HEK293 (cell line): ENCODE measurements at regions of chr1 and their contacts with region 1.

Region 1: DNA sequence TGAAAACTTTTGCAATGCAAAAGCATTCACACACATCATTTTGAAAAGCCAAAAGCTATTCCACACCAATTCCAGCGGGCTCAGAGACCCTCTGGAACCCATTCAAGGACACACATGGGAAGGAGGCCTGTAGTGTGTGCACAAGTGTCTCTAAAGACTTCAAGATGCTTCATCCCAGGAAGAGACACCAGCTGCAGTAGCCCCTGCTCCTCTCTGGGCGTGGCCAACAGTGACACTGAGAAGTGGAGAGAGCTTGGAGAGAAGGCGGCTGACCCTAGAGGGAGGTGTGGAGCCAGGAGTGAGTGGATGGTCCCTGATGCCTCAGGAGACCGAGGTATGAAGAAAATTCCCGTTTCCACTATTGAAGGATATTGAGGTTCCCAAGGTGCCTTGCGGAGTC is 14.9 kb upstream of the TNNI1 start:
- H3K4me3 ChIP-seq: no peak overlapping the region
- H3K27ac ChIP-seq: no peak overlapping the region
- H3K4me1 ChIP-seq: 0 out of 2 replicates have a peak, but pooled peaks cover 2% of the 10 kb centered on the region
- CTCF ChIP-seq: peak; percentile 56; the same call in 1 of the 2 replicates

Region 2: GRCh38 chr1:201229771-201230635 is 206.4 kb before region 1 on chr1:
- CTCF ChIA-PET with region 1: no interaction called
- POLR2A ChIA-PET with region 1: no interaction called
- H3K4me3 ChIP-seq: no peak overlapping the region
- H3K27ac ChIP-seq: no peak overlapping the region
- H3K4me1 ChIP-seq: no peaks in the 10 kb centered on the region
- CTCF ChIP-seq: no peak

Region 3: GRCh38 chr1:201447911-201448871 is 11.8 kb after region 1 on chr1:
- CTCF ChIA-PET with region 1: interaction called, 67 read pairs
- POLR2A ChIA-PET with region 1: interaction called, 6 read pairs
- H3K4me3 ChIP-seq: no peak overlapping the region
- H3K27ac ChIP-seq: no peak overlapping the region
- H3K4me1 ChIP-seq: 0 out of 2 replicates have a peak, but pooled peaks cover 6% of the 10 kb centered on the region
- CTCF ChIP-seq: peak; percentile 66

Region 4: GRCh38 chr1:201456499-201457309 is 20.3 kb after region 1 on chr1:
- CTCF ChIA-PET with region 1: interaction called, 27 read pairs
- POLR2A ChIA-PET with region 1: interaction called, 9 read pairs
- H3K4me3 ChIP-seq: no peak overlapping the region
- H3K27ac ChIP-seq: no peak overlapping the region; the same call in 1 of the 2 replicates
- H3K4me1 ChIP-seq: peaks cover 11% of the 10 kb centered on the region
- CTCF ChIP-seq: no peak

Region 5: DNA sequence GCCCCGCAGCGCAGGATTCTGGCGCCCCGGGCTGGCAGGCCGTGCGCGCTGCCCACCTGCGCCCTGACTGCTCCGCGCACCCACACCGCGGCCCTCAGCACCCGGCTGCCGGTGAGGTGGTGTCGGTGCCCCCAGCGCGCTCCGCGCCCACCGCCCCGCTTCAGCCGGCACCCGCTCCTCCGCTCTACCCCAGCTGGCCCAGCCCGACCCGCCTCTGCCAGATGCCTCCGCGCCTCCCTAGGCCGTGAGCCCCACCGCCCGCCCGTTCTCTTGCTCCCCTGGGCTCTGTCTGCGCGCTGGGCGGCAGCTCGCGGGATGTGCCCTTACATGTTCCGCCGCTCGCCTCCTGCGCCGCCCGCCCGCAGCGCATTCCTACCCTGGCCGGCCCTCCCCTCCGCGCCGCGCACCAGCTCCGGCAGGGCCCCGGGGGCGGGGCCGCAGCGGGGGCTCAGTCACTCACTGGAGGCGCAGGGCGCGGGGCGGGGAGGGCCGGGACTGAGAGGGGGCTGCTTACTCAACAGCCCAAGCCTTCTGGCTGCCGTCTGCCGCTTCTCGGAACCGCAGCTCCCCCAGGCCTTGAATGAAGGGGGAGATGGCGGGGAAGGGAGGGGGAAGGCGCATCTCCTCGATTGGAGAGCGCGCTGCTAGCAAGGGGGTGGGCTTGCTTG is 32.6 kb after region 1 on chr1 and contains the start of gene PHLDA3:
- CTCF ChIA-PET with region 1: interaction called, 7 read pairs
- POLR2A ChIA-PET with region 1: interaction called, 12 read pairs
- H3K4me3 ChIP-seq: peak within 1 kb of the TSS; percentile 71
- H3K27ac ChIP-seq: peak within 1 kb of the TSS; percentile 99
- H3K4me1 ChIP-seq: no peaks in the 10 kb centered on the region; the same call in 1 of the 2 replicates
- CTCF ChIP-seq: no peak